ENCODE measurements at regions of chr3 and their contacts with region 1.

Region 1: GRCh38 chr3:167684388-167684993 is 30.7 kb upstream of the WDR49 start:
- DNase-seq: peak in 1 of 2 experiments; percentile 58
- H3K4me3 ChIP-seq: no peak overlapping the region
- H3K27ac ChIP-seq: no peak overlapping the region
- H3K4me1 ChIP-seq: no peaks in the 10 kb centered on the region
- H3K27me3 ChIP-seq: no peaks in the 10 kb centered on the region
- CTCF ChIP-seq: peak in 2 of 3 experiments; percentile 33 to 41; a peak in 2 of 4 replicates
- EP300 ChIP-seq: no peak
- POLR2A ChIP-seq: no peak
- RAD21 ChIP-seq: peak; percentile 55 to 63

Region 2: GRCh38 chr3:167380004-167380689 is 304.3 kb before region 1 on chr3 and contains the start of gene ZBBX:
- CTCF ChIA-PET with region 1: interaction called, 15 read pairs
- POLR2A ChIA-PET with region 1: no interaction called
- DNase-seq: peak; percentile 92 to 99
- H3K4me3 ChIP-seq: peak within 1 kb of the TSS; percentile 40 to 58 (median 44)
- H3K27ac ChIP-seq: no peak within 1 kb of the TSS
- H3K4me1 ChIP-seq: no peaks in the 10 kb centered on the region
- H3K27me3 ChIP-seq: no peaks in the 10 kb centered on the region
- CTCF ChIP-seq: peak; percentile 71 to 95 (median 79)
- EP300 ChIP-seq: 0 out of 3 replicates have a peak, but pooled peaks of 1 of the 2 experiments have one; percentile 41
- POLR2A ChIP-seq: peak in 1 of 2 experiments; percentile 33; a peak in 1 of 3 replicates
- RAD21 ChIP-seq: peak; percentile 70 to 77
- total RNA-seq, gene ZBBX: 0.84 and 1.0 TPM in 2 replicates

Region 3: GRCh38 chr3:167406875-167407492 is 277.5 kb before region 1 on chr3:
- CTCF ChIA-PET with region 1: interaction called, 28 read pairs
- POLR2A ChIA-PET with region 1: no interaction called
- DNase-seq: peak in 1 of 2 experiments; percentile 31
- H3K4me3 ChIP-seq: no peak overlapping the region
- H3K27ac ChIP-seq: no peak overlapping the region
- H3K4me1 ChIP-seq: no peaks in the 10 kb centered on the region; a peak in 1 of 7 replicates
- H3K27me3 ChIP-seq: no peaks in the 10 kb centered on the region
- CTCF ChIP-seq: peak; percentile 24 to 87 (median 84)
- EP300 ChIP-seq: no peak
- POLR2A ChIP-seq: no peak
- RAD21 ChIP-seq: peak; percentile 91 to 94

Region 4: GRCh38 chr3:167653760-167654159 is 30.7 kb before region 1 on chr3 and contains the start of gene WDR49:
- CTCF ChIA-PET with region 1: interaction called, 12 read pairs
- POLR2A ChIA-PET with region 1: interaction called, 3 read pairs
- DNase-seq: peak in 1 of 2 experiments; percentile 57
- H3K4me3 ChIP-seq: peak within 1 kb of the TSS in 1 of 4 experiments; percentile 29; a peak in 1 of 8 replicates
- H3K27ac ChIP-seq: peak within 1 kb of the TSS; percentile 95
- H3K4me1 ChIP-seq: peaks cover 3 to 15% (median 10%) of the 10 kb centered on the region in 4 experiments; a peak in 5 of 7 replicates
- H3K27me3 ChIP-seq: no peaks in the 10 kb centered on the region
- CTCF ChIP-seq: no peak
- EP300 ChIP-seq: peak in 1 of 2 experiments; percentile 95; a peak in 2 of 3 replicates
- POLR2A ChIP-seq: peak; percentile 45 to 50; a peak in 2 of 3 replicates
- RAD21 ChIP-seq: 0 out of 4 replicates have a peak, but pooled peaks of 1 of the 2 experiments have one; percentile 0
- total RNA-seq, gene WDR49: 1.7 and 3.2 TPM in 2 replicates

Region 5: DNA sequence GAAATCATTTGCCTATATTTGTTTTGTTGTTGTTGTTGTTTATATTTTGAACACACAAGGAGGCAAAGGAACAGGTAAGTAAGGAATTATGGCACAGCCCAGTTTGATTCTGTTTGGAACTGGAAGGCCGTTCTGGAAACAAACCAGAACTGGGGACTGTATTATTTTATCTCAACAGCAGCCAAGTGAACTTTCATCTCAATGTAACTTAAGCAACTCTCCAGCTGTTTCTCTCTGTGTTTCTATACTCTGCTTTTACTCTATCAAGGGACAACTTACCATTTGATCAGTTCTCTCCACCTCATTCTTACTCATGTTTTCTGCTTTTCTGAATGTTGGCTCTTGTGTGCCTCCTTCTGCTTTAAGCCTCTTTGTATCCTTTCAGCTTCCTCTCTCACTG is 14.8 kb before region 1 on chr3:
- CTCF ChIA-PET with region 1: interaction called, 28 read pairs
- POLR2A ChIA-PET with region 1: no interaction called
- DNase-seq: no peak
- H3K4me3 ChIP-seq: no peak overlapping the region
- H3K27ac ChIP-seq: no peak overlapping the region
- H3K4me1 ChIP-seq: no peaks in the 10 kb centered on the region
- H3K27me3 ChIP-seq: no peaks in the 10 kb centered on the region
- CTCF ChIP-seq: no peak
- EP300 ChIP-seq: no peak
- POLR2A ChIP-seq: no peak
- RAD21 ChIP-seq: no peak

Region 6: GRCh38 chr3:167705840-167706239 is 21.3 kb after region 1 on chr3:
- CTCF ChIA-PET with region 1: interaction called, 11 read pairs
- POLR2A ChIA-PET with region 1: no interaction called
- DNase-seq: no peak
- H3K4me3 ChIP-seq: no peak overlapping the region
- H3K27ac ChIP-seq: no peak overlapping the region
- H3K4me1 ChIP-seq: no peaks in the 10 kb centered on the region
- H3K27me3 ChIP-seq: no peaks in the 10 kb centered on the region
- CTCF ChIP-seq: no peak
- EP300 ChIP-seq: no peak
- POLR2A ChIP-seq: no peak
- RAD21 ChIP-seq: no peak

Region 7: DNA sequence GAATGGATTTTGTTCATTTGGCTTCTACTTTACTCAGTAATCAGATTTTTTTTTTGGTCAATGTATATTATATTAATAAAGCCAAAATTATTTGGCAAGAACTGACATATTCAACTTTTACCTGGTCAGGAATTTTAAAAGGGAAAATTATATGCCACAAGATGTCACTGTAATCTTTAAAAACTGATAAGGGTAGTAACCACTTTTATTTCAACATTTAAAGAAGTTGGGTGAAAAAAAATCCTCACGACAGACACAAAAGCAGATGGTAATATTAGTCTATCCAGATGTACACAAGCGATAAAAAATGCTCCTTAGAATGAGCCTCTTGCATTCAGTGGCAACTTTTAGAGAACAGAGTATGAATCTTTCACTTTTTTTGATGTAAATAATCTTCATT is 153.0 kb after region 1 on chr3:
- CTCF ChIA-PET with region 1: no interaction called
- POLR2A ChIA-PET with region 1: no interaction called
- DNase-seq: no peak
- H3K4me3 ChIP-seq: no peak overlapping the region
- H3K27ac ChIP-seq: no peak overlapping the region
- H3K4me1 ChIP-seq: no peaks in the 10 kb centered on the region
- H3K27me3 ChIP-seq: peaks cover 0 to 1% (median 0%) of the 10 kb centered on the region in 4 experiments; a peak in 1 of 7 replicates
- CTCF ChIP-seq: no peak; a peak in 1 of 4 replicates
- EP300 ChIP-seq: no peak
- POLR2A ChIP-seq: no peak
- RAD21 ChIP-seq: no peak; a peak in 1 of 4 replicates

Region 8: DNA sequence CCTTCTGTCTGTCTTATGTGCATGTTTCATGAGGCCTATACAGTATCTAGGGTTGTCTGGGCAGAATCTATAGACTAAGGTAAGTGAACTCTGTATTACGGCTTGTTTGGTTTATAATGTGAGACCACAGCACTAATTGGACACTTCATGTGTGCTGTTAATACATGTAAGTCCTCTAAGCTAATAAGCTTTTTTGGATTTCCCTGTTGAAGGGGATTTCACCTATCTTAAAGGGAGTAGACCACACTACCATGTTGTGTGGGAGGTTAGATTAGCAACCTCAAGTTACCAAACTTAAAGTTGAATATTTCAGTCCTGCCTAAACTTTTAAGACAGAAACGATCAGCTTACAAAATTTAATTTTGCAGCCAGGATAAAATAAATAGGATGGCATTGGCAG is 601.0 kb after region 1 on chr3:
- CTCF ChIA-PET with region 1: no interaction called
- POLR2A ChIA-PET with region 1: no interaction called
- DNase-seq: no peak
- H3K4me3 ChIP-seq: no peak overlapping the region
- H3K27ac ChIP-seq: no peak overlapping the region
- H3K4me1 ChIP-seq: peaks cover 0 to 6% (median 3%) of the 10 kb centered on the region in 4 experiments; a peak in 2 of 7 replicates
- H3K27me3 ChIP-seq: no peaks in the 10 kb centered on the region
- CTCF ChIP-seq: no peak
- EP300 ChIP-seq: no peak
- POLR2A ChIP-seq: no peak
- RAD21 ChIP-seq: no peak